Naive thymus-derived CD4-positive, alpha-beta T cell (primary cell): ENCODE measurements at regions of chr1 and their contacts with region 1.

Region 1: GRCh38 chr1:38559161-38559824 is 300.3 kb downstream of the RRAGC start:
- DNase-seq: peak; percentile 60 to 97 (median 95)
- ATAC-seq: peak; percentile 95
- H3K4me3 ChIP-seq: peak overlapping the region; percentile 36
- H3K4me3 Mint-ChIP-seq: peak overlapping the region; percentile 74 to 87 (median 78)
- H3K27ac ChIP-seq: peak overlapping the region; percentile 34
- H3K27ac Mint-ChIP-seq: peak overlapping the region; percentile 53 to 96 (median 93)
- H3K4me1 ChIP-seq: peaks cover 27 to 43% of the 10 kb centered on the region in 2 donors
- H3K4me1 Mint-ChIP-seq: peaks cover 37 to 76% (median 64%) of the 10 kb centered on the region in 7 donors
- H3K27me3 ChIP-seq: peaks cover 0 to 8% of the 10 kb centered on the region in 2 donors
- H3K27me3 Mint-ChIP-seq: peaks cover 15 to 51% (median 22%) of the 10 kb centered on the region in 5 donors

Region 2: DNA sequence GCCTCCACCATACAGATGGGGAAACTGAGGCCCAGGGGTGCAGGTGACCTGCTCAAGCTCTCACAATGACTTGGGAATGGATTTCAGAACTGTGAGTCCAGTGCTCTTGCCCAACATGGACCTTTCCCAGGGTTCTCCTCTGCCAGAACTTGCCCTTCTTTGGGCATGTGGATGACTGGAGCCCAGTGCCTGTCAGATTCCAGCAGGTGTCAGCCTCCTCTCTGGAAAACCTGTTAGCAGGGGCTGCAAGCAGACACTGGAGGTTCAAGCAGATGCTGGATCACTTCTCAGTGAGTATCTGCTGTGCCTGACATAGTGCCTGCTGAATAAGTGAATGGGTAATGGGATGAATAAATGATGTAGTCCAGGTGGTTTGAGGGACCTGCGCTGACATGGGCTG is 198.5 kb before region 1 on chr1:
- CTCF ChIA-PET with region 1: no interaction called
- POLR2A ChIA-PET with region 1: no interaction called
- intact Hi-C with region 1: no loop called
- DNase-seq: peak in 1 of 9 donors; percentile 4
- ATAC-seq: no peak
- H3K4me3 ChIP-seq: no peak overlapping the region
- H3K4me3 Mint-ChIP-seq: no peak overlapping the region
- H3K27ac ChIP-seq: no peak overlapping the region
- H3K27ac Mint-ChIP-seq: no peak overlapping the region
- H3K4me1 ChIP-seq: no peaks in the 10 kb centered on the region
- H3K4me1 Mint-ChIP-seq: no peaks in the 10 kb centered on the region
- H3K27me3 ChIP-seq: no peaks in the 10 kb centered on the region
- H3K27me3 Mint-ChIP-seq: peaks cover 0 to 12% (median 8%) of the 10 kb centered on the region in 5 donors

Region 3: DNA sequence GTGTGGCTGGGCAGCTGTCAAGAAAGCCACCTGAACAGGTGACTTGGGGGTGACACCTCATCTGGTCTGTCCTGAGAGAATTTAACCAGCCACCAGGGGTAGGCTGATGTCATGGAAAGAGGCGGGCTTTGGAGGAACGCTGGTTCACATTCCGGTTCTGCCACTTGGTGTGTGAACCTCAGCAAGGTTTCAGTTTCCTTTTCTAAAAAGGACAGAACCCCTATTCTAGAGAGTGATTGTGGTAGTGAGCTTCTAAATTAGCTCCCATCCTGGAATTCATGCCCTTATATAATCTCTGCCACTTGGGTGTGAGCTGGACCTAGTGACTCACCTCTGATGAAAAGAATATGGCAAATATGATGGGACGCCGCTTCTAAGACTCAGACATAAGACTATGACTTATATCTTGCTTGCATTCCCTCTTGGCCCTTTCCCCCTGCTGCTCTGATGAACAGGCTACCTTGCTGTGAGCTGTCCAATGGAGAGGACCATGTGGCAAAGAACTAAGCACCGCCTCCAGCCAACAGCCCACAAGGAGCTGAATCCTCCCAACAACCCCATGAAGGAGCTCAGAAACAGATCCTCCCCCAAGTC is 31.8 kb before region 1 on chr1:
- CTCF ChIA-PET with region 1: no interaction called
- POLR2A ChIA-PET with region 1: interaction called, 3 read pairs
- intact Hi-C with region 1: loop called in 1 of 2 experiments (anchors 1 kb)
- DNase-seq: peak in 8 of 9 donors; percentile 24 to 65 (median 51)
- ATAC-seq: peak; percentile 65
- H3K4me3 ChIP-seq: peak overlapping the region; percentile 11
- H3K4me3 Mint-ChIP-seq: peak overlapping the region; percentile 54 to 84 (median 68)
- H3K27ac ChIP-seq: no peak overlapping the region
- H3K27ac Mint-ChIP-seq: peak overlapping the region in 7 of 9 donors; percentile 5 to 89 (median 69)
- H3K4me1 ChIP-seq: peaks cover 0 to 11% of the 10 kb centered on the region in 2 donors
- H3K4me1 Mint-ChIP-seq: peaks cover 1 to 23% (median 15%) of the 10 kb centered on the region in 7 donors
- H3K27me3 ChIP-seq: no peaks in the 10 kb centered on the region
- H3K27me3 Mint-ChIP-seq: peaks cover 0 to 14% (median 8%) of the 10 kb centered on the region in 5 donors